ENCODE measurements at regions of chr7 and their contacts with region 1.

Region 1: GRCh38 chr7:73738612-73739374 is at the start of gene ABHD11:
- DNase-seq: peak; percentile 90 to 99
- H3K4me3 ChIP-seq: peak within 1 kb of the TSS; percentile 68
- H3K4me1 ChIP-seq: peaks cover 8% of the 10 kb centered on the region
- H3K27me3 ChIP-seq: no peaks in the 10 kb centered on the region

Region 2: DNA sequence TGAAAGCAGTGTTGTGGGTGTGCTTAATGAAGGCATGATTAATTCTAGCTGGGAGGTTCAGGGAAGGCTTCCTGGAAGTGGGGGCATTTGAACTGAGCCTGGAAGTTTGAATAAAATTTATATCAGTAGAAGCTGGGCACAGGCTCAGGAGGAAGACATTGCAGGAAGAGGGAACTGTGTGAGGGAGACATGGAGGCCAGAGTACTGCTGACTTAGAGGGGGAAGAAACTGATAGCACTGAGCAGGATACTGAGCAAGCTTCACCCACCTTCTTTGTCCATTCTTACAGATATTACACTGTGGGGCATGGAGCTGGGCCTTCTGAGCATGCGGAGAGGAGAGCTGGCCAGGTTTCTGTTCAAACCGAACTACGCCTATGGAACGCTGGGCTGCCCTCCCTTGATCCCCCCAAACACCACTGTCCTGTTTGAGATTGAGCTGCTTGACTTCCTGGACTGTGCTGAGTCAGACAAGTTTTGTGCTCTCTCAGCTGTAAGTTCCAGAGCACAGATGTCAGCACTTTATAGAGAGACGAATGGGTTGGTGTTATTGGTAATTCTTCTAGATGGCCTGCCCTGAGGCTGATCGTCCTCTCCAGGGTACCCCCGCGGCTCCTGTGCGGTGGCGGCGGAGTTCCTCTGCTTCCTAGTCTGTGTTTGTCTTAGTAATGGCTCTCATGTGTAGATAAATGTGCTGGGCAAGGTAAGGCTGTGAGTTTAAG is 408.8 kb before region 1 on chr7:
- in situ Hi-C with region 1: loop called (anchors 10 kb)
- DNase-seq: no peak
- H3K4me3 ChIP-seq: no peak overlapping the region
- H3K4me1 ChIP-seq: no peaks in the 10 kb centered on the region
- H3K27me3 ChIP-seq: no peaks in the 10 kb centered on the region

Region 3: GRCh38 chr7:73451780-73452398 is 286.9 kb before region 1 on chr7:
- in situ Hi-C with region 1: no loop called
- DNase-seq: peak in 1 of 2 experiments; percentile 43
- H3K4me3 ChIP-seq: no peak overlapping the region
- H3K4me1 ChIP-seq: no peaks in the 10 kb centered on the region
- H3K27me3 ChIP-seq: no peaks in the 10 kb centered on the region

Region 4: DNA sequence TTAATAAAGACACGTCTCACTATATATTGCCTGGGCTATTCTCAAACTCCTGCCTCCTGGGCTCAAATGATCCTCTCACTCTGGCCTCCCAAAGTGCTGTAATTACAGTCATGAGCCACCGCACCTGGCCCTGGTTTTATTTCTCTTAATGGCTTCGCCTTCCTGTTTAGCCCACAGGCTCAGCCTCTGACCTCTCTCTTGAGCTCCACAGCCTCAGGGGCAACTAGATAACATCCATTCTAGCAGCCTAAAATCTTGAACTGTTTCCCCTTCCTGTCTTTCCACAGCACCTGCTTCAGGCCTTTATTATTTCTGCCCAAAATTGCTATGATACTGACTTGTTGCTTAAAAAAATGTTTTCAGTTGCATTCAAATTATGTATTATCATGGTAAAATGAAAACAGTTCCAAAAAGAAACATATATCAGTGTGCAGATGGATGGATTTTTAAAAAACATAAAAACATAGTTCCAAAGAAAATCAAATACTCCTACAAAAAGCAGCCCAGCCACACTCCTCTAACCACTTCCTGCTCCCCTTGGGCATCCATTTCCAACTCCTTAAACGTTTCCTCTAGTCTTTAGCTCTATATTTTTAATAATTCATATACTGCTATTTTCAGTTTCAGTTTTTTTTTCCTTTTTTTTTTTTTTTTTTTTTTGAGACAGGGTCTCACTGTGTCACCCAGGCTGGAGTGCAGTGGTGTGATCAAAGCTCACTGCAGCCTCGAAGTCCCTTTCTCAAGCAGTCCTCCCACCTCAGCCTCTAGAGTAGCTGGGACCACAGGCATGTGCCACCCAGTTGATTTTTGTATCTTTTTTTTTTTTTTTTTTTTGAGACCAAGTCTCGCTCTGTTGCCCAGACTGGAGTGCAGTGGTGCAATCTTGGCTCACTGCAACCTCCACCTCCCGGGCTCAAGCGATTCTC is 211.6 kb before region 1 on chr7:
- in situ Hi-C with region 1: no loop called
- DNase-seq: peak in 1 of 2 experiments; percentile 15
- H3K4me3 ChIP-seq: no peak overlapping the region
- H3K4me1 ChIP-seq: peaks cover 4% of the 10 kb centered on the region; the same call in 1 of the 2 replicates
- H3K27me3 ChIP-seq: no peaks in the 10 kb centered on the region

Region 5: GRCh38 chr7:73606801-73607691 is 131.7 kb before region 1 on chr7:
- in situ Hi-C with region 1: loop called (anchors 5 kb)
- DNase-seq: peak; percentile 39 to 86
- H3K4me3 ChIP-seq: no peak overlapping the region
- H3K4me1 ChIP-seq: no peaks in the 10 kb centered on the region
- H3K27me3 ChIP-seq: no peaks in the 10 kb centered on the region

Region 6: DNA sequence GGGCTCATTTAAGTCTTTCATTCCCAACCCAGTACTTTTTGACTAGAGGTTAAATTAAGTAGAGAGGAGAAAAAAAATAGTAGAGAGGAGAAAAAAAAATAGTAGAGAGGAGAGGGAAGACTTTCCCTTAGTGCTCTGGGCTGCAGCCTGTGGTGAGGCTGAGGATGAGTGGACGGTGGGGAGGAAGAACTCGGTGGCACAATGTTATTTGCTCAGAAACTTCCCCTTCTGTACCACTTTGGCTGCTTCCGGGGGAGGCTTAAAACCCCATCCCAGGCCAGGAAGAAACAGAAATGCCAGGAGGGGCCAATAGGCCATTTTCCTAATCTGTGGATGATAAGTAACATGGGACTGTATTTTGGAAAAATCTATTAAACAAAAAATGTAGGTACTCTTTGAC is 99.9 kb before region 1 on chr7:
- in situ Hi-C with region 1: no loop called
- DNase-seq: no peak
- H3K4me3 ChIP-seq: no peak overlapping the region
- H3K4me1 ChIP-seq: no peaks in the 10 kb centered on the region
- H3K27me3 ChIP-seq: no peaks in the 10 kb centered on the region

Measured in HAP-1 (cell line).